ENCODE measurements at regions of chr2 and their contacts with region 1.

Region 1: DNA sequence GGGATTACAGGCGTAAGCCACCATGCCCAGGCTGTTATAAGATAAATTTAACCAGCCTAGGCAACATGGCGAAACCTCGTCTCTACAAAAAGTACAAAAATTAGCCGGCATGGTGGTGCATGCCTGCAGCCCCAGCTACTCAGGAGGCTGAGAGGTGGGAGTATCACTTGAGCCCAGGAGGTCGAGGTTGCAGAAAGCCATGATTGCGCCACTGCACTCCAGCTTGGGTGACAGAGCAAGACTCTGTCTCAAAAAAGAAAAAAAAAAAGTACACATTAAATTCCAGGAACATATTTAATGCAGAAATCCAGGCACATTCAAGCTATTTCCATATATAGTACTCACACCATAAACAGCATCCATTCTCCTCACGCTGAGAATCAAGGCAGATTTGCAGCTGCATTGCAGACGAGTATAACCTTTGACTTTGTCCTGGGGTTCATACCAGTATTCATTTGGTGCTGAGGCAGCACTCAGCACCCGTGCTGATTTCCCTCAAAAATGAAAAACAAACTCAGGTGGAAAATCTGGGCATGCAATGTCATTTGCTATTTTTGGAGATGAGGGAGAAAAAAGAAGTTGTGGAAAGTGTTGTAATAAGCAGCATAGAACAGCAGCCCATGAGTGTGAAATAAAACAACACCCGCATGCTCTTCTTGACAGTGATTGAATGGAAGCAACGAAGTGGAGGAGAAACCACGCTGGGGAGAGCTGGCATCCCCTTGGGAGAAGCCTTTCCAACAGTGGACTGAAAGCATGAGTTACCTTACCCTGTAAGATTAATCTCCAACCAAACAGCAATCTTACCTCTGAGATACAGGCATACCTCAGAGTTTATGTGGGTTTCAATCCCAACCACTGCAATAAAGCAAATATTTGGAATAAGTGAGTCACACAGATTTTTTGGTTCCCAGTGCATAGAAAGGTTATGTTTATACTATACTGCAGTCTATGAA is 46.8 kb upstream of the ANXA4 start:
- DNase-seq: no peak
- ATAC-seq: no peak
- H3K4me3 ChIP-seq: no peak overlapping the region
- H3K27ac ChIP-seq: no peak overlapping the region
- H3K4me1 ChIP-seq: peaks cover 13% of the 10 kb centered on the region
- H3K27me3 ChIP-seq: no peaks in the 10 kb centered on the region
- CTCF ChIP-seq: no peak
- EP300 ChIP-seq: no peak
- POLR2A ChIP-seq: no peak
- RAD21 ChIP-seq: no peak

Region 2: GRCh38 chr2:69405306-69405705 is 289.9 kb before region 1 on chr2:
- CTCF ChIA-PET with region 1: no interaction called
- POLR2A ChIA-PET with region 1: no interaction called
- RAD21 ChIA-PET with region 1: no interaction called
- SMC1A ChIA-PET with region 1: no interaction called
- in situ Hi-C with region 1: no loop called
- intact Hi-C with region 1: no loop called
- DNase-seq: no peak
- ATAC-seq: no peak
- H3K4me3 ChIP-seq: no peak overlapping the region
- H3K27ac ChIP-seq: no peak overlapping the region
- H3K4me1 ChIP-seq: no peaks in the 10 kb centered on the region
- H3K27me3 ChIP-seq: no peaks in the 10 kb centered on the region
- CTCF ChIP-seq: no peak
- EP300 ChIP-seq: no peak
- POLR2A ChIP-seq: no peak
- RAD21 ChIP-seq: no peak

Region 3: GRCh38 chr2:69652221-69652651 is 42.9 kb before region 1 on chr2:
- CTCF ChIA-PET with region 1: no interaction called
- POLR2A ChIA-PET with region 1: no interaction called
- RAD21 ChIA-PET with region 1: no interaction called
- SMC1A ChIA-PET with region 1: interaction called, 3 read pairs
- in situ Hi-C with region 1: no loop called
- intact Hi-C with region 1: loop called (anchors 5 kb)
- DNase-seq: no peak
- ATAC-seq: no peak
- H3K4me3 ChIP-seq: no peak overlapping the region
- H3K27ac ChIP-seq: no peak overlapping the region
- H3K4me1 ChIP-seq: peaks cover 18% of the 10 kb centered on the region
- H3K27me3 ChIP-seq: no peaks in the 10 kb centered on the region
- CTCF ChIP-seq: no peak
- EP300 ChIP-seq: no peak
- POLR2A ChIP-seq: no peak
- RAD21 ChIP-seq: no peak

Measured in GM12878 (cell line).